HEK293T (cell line): ENCODE measurements at regions of chr9 and their contacts with region 1.

Region 1: DNA sequence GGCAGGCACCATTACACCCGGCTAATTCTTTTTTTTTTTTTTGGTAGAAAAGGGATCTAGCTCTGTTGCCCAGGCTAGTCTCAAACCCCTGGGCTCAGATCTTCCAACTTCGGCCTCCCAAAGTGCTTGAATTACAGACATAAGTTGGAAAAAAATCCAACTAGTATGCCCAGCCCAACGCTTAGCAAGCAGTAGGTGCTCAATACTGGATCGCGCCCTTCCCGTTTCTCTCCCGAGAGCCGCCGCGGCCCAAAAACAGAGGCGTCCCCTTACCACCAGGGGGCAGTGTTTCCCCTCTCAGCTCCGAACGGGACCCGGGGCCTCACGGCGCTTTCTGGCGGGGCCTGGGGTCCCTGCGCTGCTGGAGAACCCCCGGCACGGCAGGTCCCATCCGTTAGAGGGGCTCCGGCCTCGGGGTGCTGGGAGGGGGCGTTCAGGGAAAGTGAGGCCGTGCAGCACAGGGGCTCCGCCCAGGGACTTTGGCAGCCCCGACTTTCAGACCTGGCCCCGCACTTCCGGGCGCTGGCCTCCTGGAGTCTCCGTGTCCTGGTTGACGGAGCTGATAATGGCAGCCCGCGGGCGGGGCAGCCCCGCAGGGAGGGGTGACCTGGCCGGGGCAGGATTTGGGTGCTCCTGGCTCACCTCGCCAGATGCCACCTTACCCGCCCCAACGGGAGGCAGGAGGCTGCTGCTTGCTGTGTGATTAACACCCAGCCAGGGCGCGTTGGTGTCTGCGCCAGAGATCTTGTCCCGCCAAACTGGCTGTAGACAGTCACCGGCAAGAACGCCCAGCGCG is 15.2 kb downstream of the PTGES start:
- DNase-seq: peak; percentile 88

Region 2: DNA sequence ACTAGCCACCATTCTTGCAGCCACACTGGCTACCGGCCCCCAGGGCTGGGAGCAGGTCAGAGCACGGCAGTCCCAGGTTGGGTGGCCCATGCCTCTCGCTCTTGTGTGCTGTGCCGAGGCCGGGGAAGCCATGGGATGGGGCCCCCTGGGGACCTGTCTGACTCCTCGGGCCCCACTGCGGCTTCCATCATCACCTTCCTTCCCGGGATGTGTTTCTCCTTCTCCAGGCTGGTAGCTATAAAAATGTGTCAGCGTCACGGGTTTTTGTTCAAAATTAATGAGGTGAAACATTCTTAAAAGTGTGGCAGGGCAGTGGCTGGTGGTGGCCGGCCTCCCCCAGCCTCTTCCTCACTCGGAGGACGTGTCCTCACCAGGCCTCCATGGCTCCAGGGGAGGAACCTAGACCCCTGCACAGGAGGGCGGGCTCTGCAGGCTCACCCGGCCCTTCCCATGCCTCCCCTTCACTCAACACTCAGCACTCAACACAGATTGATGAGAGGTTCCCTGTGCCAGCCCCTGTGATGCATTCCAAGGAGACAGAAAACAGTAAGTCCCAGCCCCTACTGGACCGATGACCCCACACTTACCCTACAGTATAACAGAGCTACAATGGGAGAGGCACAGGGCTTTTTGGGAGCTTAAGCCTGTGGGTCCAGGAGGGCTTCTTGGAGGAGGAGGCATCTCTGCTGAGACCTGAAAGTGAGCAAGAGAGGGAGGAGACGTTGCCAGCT is 28.1 kb before region 1 on chr9:
- CTCF ChIA-PET with region 1: no interaction called
- POLR2A ChIA-PET with region 1: no interaction called
- DNase-seq: no peak

Region 3: GRCh38 chr9:129726322-129727160 is 11.1 kb before region 1 on chr9:
- CTCF ChIA-PET with region 1: interaction called, 25 read pairs
- POLR2A ChIA-PET with region 1: interaction called, 4 read pairs
- DNase-seq: peak; percentile 93

Region 4: DNA sequence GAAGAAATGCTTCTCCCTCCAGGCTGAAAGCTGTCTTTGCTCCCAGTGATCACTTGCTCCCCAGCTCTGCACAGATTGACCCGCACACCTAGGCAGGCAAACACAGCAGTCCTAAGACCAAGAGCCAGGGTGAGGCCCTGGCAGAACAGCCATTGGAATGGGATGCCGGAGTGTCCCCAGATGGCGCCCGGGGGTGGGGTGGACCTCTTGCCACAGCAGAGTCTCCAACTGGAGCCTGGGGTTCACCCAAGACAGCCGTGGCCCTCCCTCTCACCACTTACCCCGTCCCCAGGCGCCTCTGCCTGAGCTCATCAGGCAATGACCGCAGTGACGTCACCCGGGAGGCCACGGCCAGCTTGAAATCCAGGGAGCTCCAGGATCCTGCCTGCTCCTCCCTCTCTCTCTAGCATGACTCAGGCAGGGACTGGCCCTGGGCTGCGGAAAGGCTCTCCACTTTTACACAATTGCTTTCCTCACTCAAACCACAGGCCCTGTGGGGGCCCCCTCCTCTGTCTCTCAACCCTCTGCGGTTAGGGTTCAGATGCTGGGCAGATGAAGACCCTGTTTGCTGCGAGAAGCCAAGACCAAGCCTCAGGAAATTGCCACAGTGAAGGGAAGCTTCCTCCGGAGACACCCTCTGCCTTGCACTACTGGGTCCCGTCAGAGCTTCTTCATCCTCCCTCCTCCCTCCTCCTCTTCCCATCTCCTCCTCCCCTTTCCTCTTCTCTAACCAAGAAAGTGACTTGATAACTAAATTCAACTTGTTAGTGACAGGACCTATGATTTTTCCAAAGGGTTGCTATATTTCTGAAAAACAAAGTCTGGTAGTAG is 39.5 kb after region 1 on chr9:
- CTCF ChIA-PET with region 1: interaction called, 12 read pairs
- POLR2A ChIA-PET with region 1: interaction called, 12 read pairs
- DNase-seq: peak; percentile 35